ENCODE measurements at regions of chr17 and their contacts with region 1.

Region 1: GRCh38 chr17:50547035-50547735 is at the start of gene SPATA20:
- DNase-seq: peak; percentile 93
- ATAC-seq: peak; percentile 88
- H3K4me3 Mint-ChIP-seq: peak within 1 kb of the TSS; percentile 63
- H3K27ac Mint-ChIP-seq: no peak within 1 kb of the TSS
- H3K4me1 Mint-ChIP-seq: peaks cover 8% of the 10 kb centered on the region
- H3K27me3 Mint-ChIP-seq: peaks cover 7% of the 10 kb centered on the region
- total RNA-seq, gene SPATA20: 9.0 to 10.7 TPM

Region 2: DNA sequence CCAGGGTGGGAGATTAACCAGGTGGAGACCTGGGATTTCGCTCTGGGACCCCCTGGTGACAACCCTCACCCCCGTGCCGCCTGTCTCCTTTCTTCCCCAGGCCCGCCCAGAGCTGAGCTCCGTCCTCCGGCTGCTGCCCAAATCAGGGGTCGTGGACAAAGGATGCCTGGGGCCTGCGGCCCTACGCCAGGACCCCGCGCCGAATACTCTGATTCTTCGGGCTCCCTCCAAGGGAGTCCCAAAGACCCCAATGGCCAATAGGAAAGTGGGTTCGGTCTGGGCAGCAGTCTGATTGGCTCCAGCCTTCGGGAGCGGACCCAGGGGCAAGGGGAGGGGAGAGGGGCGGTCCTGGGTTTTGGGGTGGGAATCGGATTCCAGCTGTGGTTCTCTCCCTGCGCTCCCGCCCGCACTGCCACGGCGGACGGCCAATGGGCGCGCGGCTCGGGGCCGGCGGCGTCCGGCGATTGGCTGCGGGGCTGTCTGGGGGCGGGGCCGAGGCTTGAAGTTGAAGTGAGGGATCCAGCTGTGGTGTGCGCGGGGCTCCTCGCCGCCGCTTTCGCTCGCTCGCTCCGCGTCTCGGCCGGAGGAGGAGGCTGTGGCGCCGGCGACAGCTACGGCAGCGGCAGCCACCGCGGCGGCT is 13.1 kb after region 1 on chr17 and contains the start of gene CACNA1G:
- CTCF ChIA-PET with region 1: interaction called, 8 read pairs
- POLR2A ChIA-PET with region 1: no interaction called
- intact Hi-C with region 1: loop called (anchors 1 kb)
- DNase-seq: peak; percentile 93
- ATAC-seq: peak; percentile 94
- H3K4me3 Mint-ChIP-seq: peak within 1 kb of the TSS; percentile 55
- H3K27ac Mint-ChIP-seq: no peak within 1 kb of the TSS
- H3K4me1 Mint-ChIP-seq: peaks cover 21% of the 10 kb centered on the region
- H3K27me3 Mint-ChIP-seq: peaks cover 51% of the 10 kb centered on the region
- total RNA-seq, gene CACNA1G: not detected

Region 3: GRCh38 chr17:50681263-50682210 is 134.4 kb after region 1 on chr17:
- CTCF ChIA-PET with region 1: interaction called, 3 read pairs
- POLR2A ChIA-PET with region 1: no interaction called
- intact Hi-C with region 1: loop called in 1 of 2 experiments (anchors 2 kb)
- DNase-seq: no peak
- ATAC-seq: peak; percentile 36
- H3K4me3 Mint-ChIP-seq: no peak overlapping the region
- H3K27ac Mint-ChIP-seq: no peak overlapping the region
- H3K4me1 Mint-ChIP-seq: peaks cover 4% of the 10 kb centered on the region
- H3K27me3 Mint-ChIP-seq: peaks cover 9% of the 10 kb centered on the region

Region 4: GRCh38 chr17:50841949-50842354 is 294.8 kb after region 1 on chr17:
- CTCF ChIA-PET with region 1: no interaction called
- POLR2A ChIA-PET with region 1: no interaction called
- intact Hi-C with region 1: loop called (anchors 1 to 5 kb)
- DNase-seq: peak; percentile 77
- ATAC-seq: peak; percentile 85
- H3K4me3 Mint-ChIP-seq: no peak overlapping the region
- H3K27ac Mint-ChIP-seq: no peak overlapping the region
- H3K4me1 Mint-ChIP-seq: no peaks in the 10 kb centered on the region
- H3K27me3 Mint-ChIP-seq: no peaks in the 10 kb centered on the region

Region 5: DNA sequence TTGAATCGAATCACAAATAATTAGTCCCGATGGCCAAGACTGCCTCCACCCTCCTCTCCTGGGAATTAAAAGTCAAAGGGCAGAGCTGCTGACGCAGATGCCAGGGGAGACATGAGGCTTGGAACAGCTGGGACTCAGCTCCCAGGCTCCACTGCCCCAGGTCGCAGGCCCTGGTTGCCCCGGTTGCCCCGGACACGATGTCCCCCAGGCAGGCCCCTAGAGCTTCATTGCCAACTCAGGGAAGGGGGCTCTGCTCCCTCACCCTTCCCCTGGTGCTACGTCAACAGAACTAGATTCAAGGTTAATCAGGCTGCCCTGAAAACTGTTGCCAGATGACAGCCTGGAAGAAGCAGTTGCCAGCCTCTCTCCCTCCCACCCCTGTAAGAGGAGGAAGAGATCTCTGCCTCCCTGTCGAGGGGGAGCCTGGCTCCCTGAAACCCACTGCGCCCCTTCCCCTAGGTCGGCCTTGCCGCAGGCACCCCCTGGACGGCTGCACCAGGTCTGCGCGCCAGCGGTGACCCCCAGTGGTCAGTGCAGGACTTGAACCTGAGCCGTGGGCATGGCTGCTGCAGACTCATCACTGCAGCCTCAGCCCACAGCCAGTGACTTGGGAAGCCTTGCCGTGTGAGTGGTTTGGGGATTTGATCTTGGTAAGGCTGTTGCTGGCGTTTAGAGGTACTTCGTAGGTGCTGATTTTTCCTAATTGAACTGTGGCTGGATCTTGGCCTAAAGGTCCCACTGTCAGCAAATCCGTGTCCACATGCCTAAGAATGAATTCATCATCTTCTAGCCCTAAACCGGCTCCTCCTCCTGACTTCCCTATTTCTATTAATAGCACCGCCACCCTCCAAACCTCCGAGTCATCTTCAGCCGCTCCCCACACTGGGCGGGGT is 403.1 kb after region 1 on chr17:
- CTCF ChIA-PET with region 1: interaction called, 4 read pairs
- POLR2A ChIA-PET with region 1: no interaction called
- intact Hi-C with region 1: loop called (anchors 5 to 10 kb)
- DNase-seq: peak; percentile 76
- ATAC-seq: peak; percentile 88
- H3K4me3 Mint-ChIP-seq: no peak overlapping the region
- H3K27ac Mint-ChIP-seq: no peak overlapping the region
- H3K4me1 Mint-ChIP-seq: peaks cover 16% of the 10 kb centered on the region
- H3K27me3 Mint-ChIP-seq: no peaks in the 10 kb centered on the region

Region 6: DNA sequence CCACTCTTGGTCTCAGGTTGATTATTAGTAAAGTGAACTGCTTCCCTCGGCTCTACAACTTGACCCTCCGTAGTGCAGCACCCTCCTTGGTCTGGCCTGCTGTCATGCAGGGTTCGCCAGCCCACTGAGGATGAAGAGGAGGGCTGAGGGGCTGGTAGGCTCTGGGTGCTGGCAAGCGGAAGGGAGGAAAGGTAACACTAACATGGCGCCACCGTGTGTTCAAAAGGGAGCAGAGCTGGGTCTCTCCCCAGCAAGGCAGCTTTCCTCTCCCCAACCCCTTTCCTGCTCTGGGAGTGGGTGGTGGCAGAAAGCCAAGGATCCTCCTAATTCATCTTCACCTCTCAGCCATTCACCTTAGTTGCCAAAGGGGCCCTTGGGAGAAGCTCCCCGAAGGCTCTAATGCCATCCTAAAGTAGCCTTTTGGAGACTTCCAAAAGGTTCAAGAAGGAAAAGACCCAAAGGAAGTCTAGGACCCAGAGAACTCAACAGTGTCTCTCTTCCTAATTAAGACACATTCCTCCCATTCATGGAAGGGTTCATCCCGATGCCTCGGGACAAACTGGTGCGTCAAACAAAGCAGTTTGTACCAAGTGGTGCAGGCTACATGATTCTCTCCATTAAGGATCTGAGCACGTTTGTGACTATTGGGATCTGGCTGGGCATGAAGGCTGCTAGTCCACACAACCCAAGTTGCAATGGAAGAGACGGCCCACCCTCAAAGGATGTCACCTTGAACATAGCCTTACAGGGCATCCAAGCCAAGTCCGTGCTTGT is 409.8 kb after region 1 on chr17:
- CTCF ChIA-PET with region 1: no interaction called
- POLR2A ChIA-PET with region 1: no interaction called
- intact Hi-C with region 1: loop called in 1 of 2 experiments (anchors 5 kb)
- DNase-seq: peak; percentile 80
- ATAC-seq: peak; percentile 98
- H3K4me3 Mint-ChIP-seq: no peak overlapping the region
- H3K27ac Mint-ChIP-seq: no peak overlapping the region
- H3K4me1 Mint-ChIP-seq: peaks cover 2% of the 10 kb centered on the region
- H3K27me3 Mint-ChIP-seq: no peaks in the 10 kb centered on the region

Measured in activated CD4-positive, alpha-beta T cell treated with anti-CD3 and anti-CD28 coated beads for 36 hours (primary cell).